Activated T-helper 1 cell treated with anti-CD3 and anti-CD28 coated beads, Interleukin-12 subunit alpha, Interleukin-12 subunit beta, Interleukin-2, Interleukin-4 antibody, amounts not matched to agents 30 ng/mL and 10 ng/mL and 1 ng/mL, durations not matched to agents 14 hours and 24 hours and 36 hours (primary cell): ENCODE measurements at regions of chr4 and their contacts with region 1.

Region 1: GRCh38 chr4:89242864-89243732 is 64.5 kb downstream of the GPRIN3 start:
- DNase-seq: peak; percentile 27
- H3K4me3 Mint-ChIP-seq: peak overlapping the region; percentile 24
- H3K27ac Mint-ChIP-seq: peak overlapping the region; percentile 82
- H3K4me1 Mint-ChIP-seq: peaks cover 58% of the 10 kb centered on the region
- H3K27me3 Mint-ChIP-seq: no peaks in the 10 kb centered on the region

Region 2: DNA sequence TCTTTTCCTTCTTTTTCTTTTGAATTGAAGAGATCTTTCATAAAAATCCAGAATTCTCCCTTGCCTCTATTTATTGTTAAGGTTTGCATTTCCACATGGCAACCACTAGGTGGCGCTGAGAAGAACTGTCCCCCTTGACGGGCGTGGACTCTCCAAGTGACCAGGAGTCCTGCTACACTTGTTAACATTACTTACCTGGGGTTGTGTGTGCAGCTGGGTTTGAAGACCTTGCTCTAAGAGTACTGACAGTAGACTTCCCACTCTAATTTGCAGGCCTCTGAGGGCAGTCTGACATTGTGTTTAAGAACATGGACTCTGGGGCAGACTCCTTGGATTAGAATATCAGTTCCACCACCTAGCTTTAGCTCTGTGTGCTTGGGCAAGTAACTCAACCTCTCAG is 11.7 kb after region 1 on chr4:
- intact Hi-C with region 1: loop called (anchors 1 kb)
- DNase-seq: peak; percentile 13
- H3K4me3 Mint-ChIP-seq: no peak overlapping the region
- H3K27ac Mint-ChIP-seq: peak overlapping the region; percentile 68
- H3K4me1 Mint-ChIP-seq: peaks cover 76% of the 10 kb centered on the region
- H3K27me3 Mint-ChIP-seq: no peaks in the 10 kb centered on the region

Region 3: GRCh38 chr4:89307446-89308160 is 64.5 kb after region 1 on chr4 and contains the start of gene GPRIN3:
- intact Hi-C with region 1: loop called (anchors 1 kb)
- DNase-seq: peak; percentile 58
- H3K4me3 Mint-ChIP-seq: peak within 1 kb of the TSS; percentile 95
- H3K27ac Mint-ChIP-seq: peak within 1 kb of the TSS; percentile 97
- H3K4me1 Mint-ChIP-seq: peaks cover 72% of the 10 kb centered on the region
- H3K27me3 Mint-ChIP-seq: no peaks in the 10 kb centered on the region
- total RNA-seq, gene GPRIN3: 37.1 and 39.0 TPM in 2 replicates

Region 4: GRCh38 chr4:89316931-89317366 is 73.9 kb after region 1 on chr4:
- intact Hi-C with region 1: loop called (anchors 1 kb)
- DNase-seq: no peak
- H3K4me3 Mint-ChIP-seq: peak overlapping the region; percentile 64
- H3K27ac Mint-ChIP-seq: peak overlapping the region; percentile 84
- H3K4me1 Mint-ChIP-seq: peaks cover 38% of the 10 kb centered on the region
- H3K27me3 Mint-ChIP-seq: no peaks in the 10 kb centered on the region

Region 5: GRCh38 chr4:89619206-89619962 is 376.3 kb after region 1 on chr4:
- intact Hi-C with region 1: no loop called
- DNase-seq: peak; percentile 9
- H3K4me3 Mint-ChIP-seq: peak overlapping the region; percentile 59
- H3K27ac Mint-ChIP-seq: peak overlapping the region; percentile 81
- H3K4me1 Mint-ChIP-seq: peaks cover 22% of the 10 kb centered on the region
- H3K27me3 Mint-ChIP-seq: no peaks in the 10 kb centered on the region